ENCODE measurements at regions of chr3 and their contacts with region 1.

Region 1: DNA sequence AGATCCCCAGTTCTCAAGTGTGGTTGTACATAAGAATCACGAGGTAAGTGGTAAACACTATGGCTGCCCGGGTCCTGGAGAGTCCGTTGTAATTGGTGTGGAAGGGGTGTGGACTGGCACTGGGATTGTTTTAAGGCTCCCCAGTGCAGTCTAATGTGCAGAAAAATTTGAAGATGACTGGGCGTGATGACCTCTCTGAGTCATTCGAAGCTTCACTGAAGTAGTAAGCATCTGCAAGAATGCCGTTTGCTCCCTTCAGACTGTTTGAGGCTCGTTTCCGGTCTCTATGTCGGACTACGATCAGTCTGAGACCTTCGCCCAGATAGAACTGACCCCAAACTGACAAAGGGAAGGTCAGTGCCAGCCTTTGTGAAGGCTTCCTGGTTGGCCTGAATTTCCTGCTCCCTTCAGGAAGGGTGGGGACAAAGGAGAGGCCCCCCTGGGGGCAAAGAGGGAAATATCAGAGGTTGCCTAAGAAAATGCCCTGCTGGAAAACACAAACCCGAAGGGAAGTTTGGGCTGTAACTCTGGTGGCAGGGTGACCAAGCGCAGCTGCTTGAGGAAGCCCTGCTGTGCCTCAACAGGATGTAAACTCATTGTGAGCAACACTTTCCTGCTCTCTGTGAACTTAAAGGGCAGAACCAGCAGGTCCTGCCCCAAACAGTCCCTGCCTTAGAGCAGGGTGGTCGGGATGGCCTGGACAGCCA is 34.6 kb downstream of the BTD start:
- DNase-seq: peak; percentile 30
- H3K4me3 Mint-ChIP-seq: peak overlapping the region; percentile 51
- H3K27ac Mint-ChIP-seq: peak overlapping the region; percentile 79
- H3K4me1 Mint-ChIP-seq: peaks cover 67% of the 10 kb centered on the region
- H3K27me3 Mint-ChIP-seq: no peaks in the 10 kb centered on the region

Region 2: DNA sequence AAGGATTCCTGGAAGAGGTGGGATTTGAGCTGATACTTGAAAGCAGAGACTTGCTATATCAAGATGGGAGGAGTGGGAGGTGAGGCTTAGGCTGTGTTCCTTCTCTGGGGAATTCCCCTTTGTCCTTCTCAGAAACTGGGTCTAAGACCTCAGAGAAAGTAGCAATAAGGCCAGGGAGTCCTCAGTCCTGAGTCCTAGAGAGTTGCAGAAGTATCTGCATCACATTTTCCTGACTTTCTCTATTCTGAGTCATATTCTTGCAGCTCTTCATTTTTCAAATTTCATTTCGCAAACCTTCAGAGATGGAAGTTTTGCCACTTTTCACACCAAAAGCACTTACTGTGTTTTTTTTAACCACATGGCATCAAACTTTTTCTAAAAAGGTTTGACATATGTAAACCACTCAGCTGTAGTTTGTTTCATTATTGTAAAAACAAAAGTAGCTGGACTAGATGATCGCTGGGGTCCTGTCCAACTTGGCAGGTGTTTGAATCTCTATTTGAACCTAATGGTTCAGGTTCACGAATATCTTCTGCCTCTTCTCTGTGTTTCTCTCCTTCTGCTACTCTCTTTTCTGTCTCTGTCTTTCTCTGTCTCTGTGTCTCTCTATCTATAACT is 135.9 kb before region 1 on chr3:
- intact Hi-C with region 1: loop called (anchors 5 kb)
- DNase-seq: no peak
- H3K4me3 Mint-ChIP-seq: no peak overlapping the region
- H3K27ac Mint-ChIP-seq: peak overlapping the region; percentile 37
- H3K4me1 Mint-ChIP-seq: peaks cover 38% of the 10 kb centered on the region
- H3K27me3 Mint-ChIP-seq: peaks cover under 1% of the 10 kb centered on the region

Region 3: DNA sequence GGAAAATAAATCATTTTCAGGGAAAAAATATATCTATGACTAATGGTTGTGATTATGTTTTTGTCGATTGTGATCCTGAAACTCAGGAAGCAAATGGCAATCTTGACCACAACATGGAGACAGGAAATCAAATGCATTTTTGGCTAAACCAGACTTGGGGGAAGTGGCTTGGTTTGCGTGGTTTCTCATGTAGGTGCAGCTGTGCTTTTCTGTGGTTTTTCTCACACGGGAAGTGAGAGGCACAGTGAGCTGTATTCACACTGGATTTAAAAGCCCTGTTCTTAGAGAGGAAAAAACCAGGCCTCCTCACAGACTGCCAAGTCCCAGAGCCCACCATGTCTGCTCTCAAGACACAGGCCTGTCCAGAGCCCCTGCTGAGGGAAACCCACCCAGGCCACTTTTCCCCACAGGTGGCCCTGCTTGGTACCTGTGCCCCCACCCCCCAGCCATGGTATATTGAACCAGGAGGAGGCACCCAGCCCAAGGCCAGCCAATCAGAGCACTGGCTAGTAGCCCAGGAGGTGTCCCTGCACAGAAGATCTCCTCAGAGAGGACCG is 11.5 kb after region 1 on chr3:
- intact Hi-C with region 1: loop called (anchors 1 kb)
- DNase-seq: peak; percentile 63
- H3K4me3 Mint-ChIP-seq: peak overlapping the region; percentile 60
- H3K27ac Mint-ChIP-seq: peak overlapping the region; percentile 57
- H3K4me1 Mint-ChIP-seq: peaks cover 52% of the 10 kb centered on the region
- H3K27me3 Mint-ChIP-seq: peaks cover 7% of the 10 kb centered on the region

Region 4: GRCh38 chr3:15667484-15667883 is 31.3 kb after region 1 on chr3:
- intact Hi-C with region 1: loop called (anchors 1 kb)
- DNase-seq: peak; percentile 20
- H3K4me3 Mint-ChIP-seq: peak overlapping the region; percentile 6
- H3K27ac Mint-ChIP-seq: no peak overlapping the region
- H3K4me1 Mint-ChIP-seq: peaks cover 22% of the 10 kb centered on the region
- H3K27me3 Mint-ChIP-seq: no peaks in the 10 kb centered on the region

Region 5: DNA sequence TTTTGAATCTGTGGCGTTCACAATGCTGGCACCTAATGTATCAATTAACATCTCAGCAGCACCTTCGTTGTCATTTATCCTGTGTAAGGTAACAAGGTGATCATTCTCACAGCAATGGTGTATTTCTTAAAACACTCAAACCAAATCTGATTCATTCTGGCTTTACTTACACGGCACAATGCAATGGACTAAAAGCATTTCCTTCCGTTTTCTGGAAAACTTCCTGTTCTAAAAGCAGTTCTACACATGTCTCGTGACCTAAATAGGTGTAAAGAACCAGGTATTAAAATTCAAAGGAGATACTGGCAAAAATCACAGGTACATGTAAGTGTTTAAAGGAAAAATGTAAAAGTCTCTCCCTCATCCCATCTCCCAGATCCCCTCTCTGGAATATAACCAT is 43.1 kb after region 1 on chr3:
- intact Hi-C with region 1: no loop called
- DNase-seq: no peak
- H3K4me3 Mint-ChIP-seq: no peak overlapping the region
- H3K27ac Mint-ChIP-seq: no peak overlapping the region
- H3K4me1 Mint-ChIP-seq: no peaks in the 10 kb centered on the region
- H3K27me3 Mint-ChIP-seq: no peaks in the 10 kb centered on the region

Region 6: DNA sequence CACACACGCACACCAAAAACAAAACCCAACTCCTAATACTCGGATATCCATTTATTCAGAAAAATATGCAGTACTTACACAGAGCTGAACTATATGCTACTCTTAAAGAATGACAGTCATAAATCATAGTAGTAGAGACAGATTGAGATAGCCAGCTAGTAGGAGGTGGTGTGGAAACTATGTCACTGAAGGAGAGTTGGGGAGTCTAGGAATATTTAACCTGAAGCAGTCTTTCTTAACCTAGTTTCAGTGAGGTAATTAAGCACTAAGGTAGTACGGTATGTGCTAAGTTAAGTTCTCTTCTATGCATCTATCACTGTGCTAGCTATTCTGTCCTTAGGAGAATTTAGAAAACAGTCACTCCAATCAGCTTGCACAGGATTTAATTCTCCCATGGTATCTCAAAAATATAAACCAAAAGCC is 107.4 kb after region 1 on chr3:
- intact Hi-C with region 1: loop called (anchors 1 kb)
- DNase-seq: no peak
- H3K4me3 Mint-ChIP-seq: no peak overlapping the region
- H3K27ac Mint-ChIP-seq: peak overlapping the region; percentile 55
- H3K4me1 Mint-ChIP-seq: peaks cover 51% of the 10 kb centered on the region
- H3K27me3 Mint-ChIP-seq: no peaks in the 10 kb centered on the region

Region 7: DNA sequence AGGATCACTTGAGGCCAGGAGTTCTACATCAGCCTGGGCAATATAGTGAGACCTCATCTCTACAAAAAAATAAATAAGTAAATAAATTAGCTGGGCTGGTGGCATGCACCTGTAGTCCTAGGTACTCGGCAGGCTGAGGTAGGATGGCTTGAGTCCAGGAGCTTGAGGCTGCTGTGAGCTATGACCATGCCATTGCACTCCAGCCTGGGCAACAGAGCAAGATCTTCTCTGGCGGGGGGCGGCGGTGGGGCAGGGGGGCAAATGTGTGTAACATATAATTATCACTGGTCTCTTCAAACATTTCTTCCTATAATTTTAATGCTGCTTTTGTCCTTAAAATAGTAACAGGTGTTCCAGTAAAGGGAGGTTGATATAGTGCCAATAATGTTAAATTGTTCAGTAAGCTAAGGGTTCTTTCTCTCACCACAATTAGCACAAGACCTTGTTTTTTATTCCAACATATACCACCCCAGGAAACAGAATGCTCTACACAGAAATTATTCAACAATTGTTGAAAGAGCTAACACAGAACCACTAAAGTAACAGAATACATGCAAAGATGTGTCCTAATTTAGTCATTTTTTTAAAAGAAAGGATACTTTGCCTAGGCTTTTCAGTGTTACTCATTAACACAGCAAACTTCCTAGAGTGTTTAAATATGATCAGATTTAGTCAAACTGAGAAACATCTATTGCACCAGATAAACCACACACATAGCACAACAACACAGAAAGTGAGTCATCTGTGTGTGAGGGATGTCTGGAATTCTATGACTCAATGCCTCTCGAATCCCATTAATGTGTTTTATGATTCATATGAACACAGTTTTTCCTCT is 132.5 kb after region 1 on chr3:
- intact Hi-C with region 1: loop called (anchors 1 kb)
- DNase-seq: no peak
- H3K4me3 Mint-ChIP-seq: peak overlapping the region; percentile 12
- H3K27ac Mint-ChIP-seq: peak overlapping the region; percentile 75
- H3K4me1 Mint-ChIP-seq: peaks cover 50% of the 10 kb centered on the region
- H3K27me3 Mint-ChIP-seq: no peaks in the 10 kb centered on the region